Left ventricle myocardium superior (tissue), 1 donor: ENCODE measurements at regions of chr19 and their contacts with region 1.

Region 1: GRCh38 chr19:48795055-48795684 is 15.7 kb downstream of the BCAT2 start:
- DNase-seq: peak; percentile 93
- ATAC-seq: peak; percentile 99

Region 2: GRCh38 chr19:48698046-48698445 is 97.1 kb before region 1 on chr19:
- intact Hi-C with region 1: no loop called
- DNase-seq: no peak
- ATAC-seq: no peak

Region 3: DNA sequence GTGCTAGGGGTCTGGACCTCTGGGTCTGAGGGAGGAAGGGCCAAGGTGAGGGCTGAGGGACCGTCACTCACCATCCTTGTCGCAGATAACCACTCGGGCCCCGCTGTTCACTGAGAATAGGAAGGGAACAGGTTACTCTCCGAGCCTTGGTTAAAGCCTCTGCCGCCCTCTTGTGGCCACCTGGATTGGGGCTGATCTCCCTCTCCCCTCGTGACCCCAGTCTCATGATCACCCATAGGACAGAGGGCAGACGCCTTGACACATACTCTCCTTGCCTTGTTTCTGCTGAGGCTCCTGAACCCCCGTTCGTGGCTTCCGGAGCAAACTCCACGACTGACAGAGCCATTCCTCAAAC is 40.5 kb after region 1 on chr19:
- intact Hi-C with region 1: loop called (anchors 2 kb)
- DNase-seq: peak; percentile 96
- ATAC-seq: peak; percentile 94